ENCODE measurements at regions of chr10 and their contacts with region 1.

Region 1: DNA sequence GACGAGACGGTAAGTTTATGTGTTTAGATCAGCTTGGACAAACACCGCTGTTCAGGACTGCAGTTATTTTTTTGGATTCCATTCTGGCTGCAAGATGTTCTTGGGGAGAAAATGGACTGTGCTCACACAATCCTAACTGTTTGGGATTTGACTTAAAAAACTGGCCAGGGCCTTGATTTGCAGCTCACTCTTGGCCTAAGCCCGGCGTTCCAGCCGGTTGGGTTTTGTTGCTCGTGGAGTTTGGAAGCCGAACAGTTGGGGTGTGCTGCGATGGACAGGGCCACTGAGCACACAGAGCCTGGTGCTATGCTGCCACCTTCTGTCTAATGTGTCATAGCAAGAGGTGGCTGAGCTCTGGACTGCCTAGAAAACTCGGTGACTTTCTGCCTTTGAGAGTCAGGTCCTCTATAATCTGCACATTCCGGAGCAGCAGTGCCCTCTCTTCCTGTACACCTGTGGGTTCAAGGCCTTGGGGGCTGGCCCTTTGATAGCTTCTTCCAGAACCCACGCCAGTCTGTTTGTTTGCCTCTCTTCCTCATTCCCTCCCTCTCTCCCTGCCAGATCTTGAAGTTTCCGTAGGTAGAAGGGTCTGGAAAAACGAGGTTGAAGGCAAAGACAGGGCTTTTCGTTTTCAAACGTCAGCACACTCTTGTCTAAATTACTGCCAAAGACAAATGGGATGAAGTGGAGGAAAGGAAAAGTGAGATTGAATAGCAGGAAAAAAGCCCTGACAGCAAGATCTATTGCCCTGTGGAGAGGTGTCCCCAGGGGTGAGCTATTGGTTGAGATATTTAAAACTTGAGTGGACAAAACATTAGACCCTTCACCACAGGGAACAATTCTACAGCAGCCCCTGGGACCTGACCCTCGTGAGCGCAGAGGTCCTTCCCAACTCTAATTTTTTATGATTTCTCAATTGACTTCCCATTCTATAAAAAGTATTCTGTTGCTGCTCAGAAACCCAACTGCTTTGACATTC is 167.5 kb upstream of the HABP2 start:
- DNase-seq: peak; percentile 86
- ATAC-seq: peak; percentile 91
- H3K4me3 ChIP-seq: peak overlapping the region; percentile 47
- H3K27ac ChIP-seq: peak overlapping the region; percentile 84
- H3K4me1 ChIP-seq: peaks cover 53% of the 10 kb centered on the region
- H3K27me3 ChIP-seq: no peaks in the 10 kb centered on the region
- CTCF ChIP-seq: peak; percentile 84

Region 2: GRCh38 chr10:112471878-112472487 is 913.3 kb before region 1 on chr10:
- CTCF ChIA-PET with region 1: no interaction called
- POLR2A ChIA-PET with region 1: no interaction called
- intact Hi-C with region 1: loop called (anchors 10 kb)
- DNase-seq: peak; percentile 48
- ATAC-seq: peak; percentile 57
- H3K4me3 ChIP-seq: no peak overlapping the region
- H3K27ac ChIP-seq: no peak overlapping the region
- H3K4me1 ChIP-seq: 0 out of 2 replicates have a peak, but pooled peaks cover 7% of the 10 kb centered on the region
- H3K27me3 ChIP-seq: no peaks in the 10 kb centered on the region
- CTCF ChIP-seq: peak; percentile 80

Region 3: GRCh38 chr10:112732277-112732921 is 652.9 kb before region 1 on chr10:
- CTCF ChIA-PET with region 1: no interaction called
- POLR2A ChIA-PET with region 1: no interaction called
- intact Hi-C with region 1: no loop called
- DNase-seq: peak; percentile 10
- ATAC-seq: no peak
- H3K4me3 ChIP-seq: no peak overlapping the region
- H3K27ac ChIP-seq: no peak overlapping the region
- H3K4me1 ChIP-seq: no peaks in the 10 kb centered on the region
- H3K27me3 ChIP-seq: no peaks in the 10 kb centered on the region
- CTCF ChIP-seq: no peak

Region 4: GRCh38 chr10:112949875-112950507 is 435.3 kb before region 1 on chr10 and contains the start of gene TCF7L2:
- CTCF ChIA-PET with region 1: no interaction called
- POLR2A ChIA-PET with region 1: no interaction called
- intact Hi-C with region 1: loop called (anchors 10 kb)
- DNase-seq: peak; percentile 93
- ATAC-seq: peak; percentile 68
- H3K4me3 ChIP-seq: peak within 1 kb of the TSS; percentile 95
- H3K27ac ChIP-seq: peak within 1 kb of the TSS; percentile 72
- H3K4me1 ChIP-seq: peaks cover 19% of the 10 kb centered on the region
- H3K27me3 ChIP-seq: no peaks in the 10 kb centered on the region
- CTCF ChIP-seq: no peak
- total RNA-seq, gene TCF7L2: 14.3 and 16.1 TPM in 2 replicates

Region 5: GRCh38 chr10:113216102-113216501 is 169.2 kb before region 1 on chr10:
- CTCF ChIA-PET with region 1: interaction called, 25 read pairs
- POLR2A ChIA-PET with region 1: interaction called, 3 read pairs
- intact Hi-C with region 1: loop called (anchors 1 kb)
- DNase-seq: peak; percentile 50
- ATAC-seq: peak; percentile 54; the same call in 1 of the 2 replicates
- H3K4me3 ChIP-seq: no peak overlapping the region
- H3K27ac ChIP-seq: no peak overlapping the region
- H3K4me1 ChIP-seq: no peaks in the 10 kb centered on the region
- H3K27me3 ChIP-seq: no peaks in the 10 kb centered on the region
- CTCF ChIP-seq: peak; percentile 67

Region 6: GRCh38 chr10:113454341-113455061 is 69.2 kb after region 1 on chr10:
- CTCF ChIA-PET with region 1: no interaction called
- POLR2A ChIA-PET with region 1: no interaction called
- intact Hi-C with region 1: loop called (anchors 1 kb)
- DNase-seq: peak; percentile 45
- ATAC-seq: peak; percentile 78
- H3K4me3 ChIP-seq: no peak overlapping the region
- H3K27ac ChIP-seq: no peak overlapping the region
- H3K4me1 ChIP-seq: peaks cover 4% of the 10 kb centered on the region; the same call in 1 of the 2 replicates
- H3K27me3 ChIP-seq: no peaks in the 10 kb centered on the region
- CTCF ChIP-seq: peak; percentile 82

Region 7: GRCh38 chr10:113475381-113475807 is 90.1 kb after region 1 on chr10:
- CTCF ChIA-PET with region 1: no interaction called
- POLR2A ChIA-PET with region 1: no interaction called
- intact Hi-C with region 1: no loop called
- DNase-seq: peak; percentile 85
- ATAC-seq: peak; percentile 76
- H3K4me3 ChIP-seq: no peak overlapping the region
- H3K27ac ChIP-seq: no peak overlapping the region
- H3K4me1 ChIP-seq: peaks cover 21% of the 10 kb centered on the region
- H3K27me3 ChIP-seq: no peaks in the 10 kb centered on the region
- CTCF ChIP-seq: peak; percentile 43

Measured in PC-3 (cell line).